ENCODE measurements at regions of chr3 and their contacts with region 1.

Region 1: GRCh38 chr3:127710155-127710941 is 37.6 kb downstream of the ABTB1 start:
- DNase-seq: peak; percentile 54

Region 2: GRCh38 chr3:127747723-127748521 is 37.6 kb after region 1 on chr3:
- intact Hi-C with region 1: loop called (anchors 5 kb)
- DNase-seq: peak; percentile 82

Measured in cardiac septum (tissue), 1 donor.